SK-N-SH (cell line): ENCODE measurements at regions of chr10 and their contacts with region 1.

Region 1: GRCh38 chr10:132892004-132892403 is 50.4 kb downstream of the CFAP46 start:
- DNase-seq: no peak
- H3K4me3 ChIP-seq: no peak overlapping the region
- H3K27ac ChIP-seq: no peak overlapping the region
- H3K4me1 ChIP-seq: no peaks in the 10 kb centered on the region; a peak in 1 of 4 replicates
- H3K27me3 ChIP-seq: no peaks in the 10 kb centered on the region
- CTCF ChIP-seq: no peak
- EP300 ChIP-seq: no peak
- RAD21 ChIP-seq: no peak

Region 2: DNA sequence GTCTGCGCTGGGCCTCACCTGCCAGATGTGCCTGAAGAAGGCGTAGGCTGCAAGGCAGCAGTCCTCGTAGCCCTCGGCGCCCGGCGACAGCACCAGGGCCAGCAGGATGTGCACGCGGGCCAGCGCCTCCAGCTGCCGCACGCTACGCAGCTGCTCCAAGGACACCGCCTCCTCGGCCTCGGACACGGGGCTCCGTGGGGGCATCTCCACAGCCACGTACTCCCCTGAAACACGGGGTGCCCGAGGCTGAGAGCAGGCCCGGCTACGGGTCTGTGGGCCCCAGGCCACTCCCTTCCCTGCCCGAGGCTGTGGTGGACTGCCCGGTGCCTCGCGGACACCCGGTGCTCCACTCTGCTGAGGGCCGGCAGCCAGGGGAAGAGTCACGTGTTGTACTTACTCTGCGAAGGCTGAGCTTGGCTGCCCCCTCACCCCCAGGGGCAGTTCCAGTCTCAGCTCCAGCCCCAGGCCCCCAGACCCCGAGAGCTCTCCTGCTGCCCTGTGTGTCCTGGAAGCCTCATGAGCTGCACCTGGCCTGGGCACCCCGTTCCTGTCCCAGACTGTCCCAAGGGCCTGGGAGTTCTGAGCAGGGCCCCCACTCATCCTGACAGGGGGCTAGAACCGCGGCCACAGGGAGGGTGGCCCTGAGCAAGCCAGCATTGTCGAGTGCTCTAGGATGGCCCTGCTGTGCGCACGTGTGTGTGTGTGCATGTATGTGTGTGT is 12.4 kb before region 1 on chr10:
- CTCF ChIA-PET with region 1: no interaction called
- POLR2A ChIA-PET with region 1: no interaction called
- DNase-seq: no peak
- H3K4me3 ChIP-seq: no peak overlapping the region
- H3K27ac ChIP-seq: no peak overlapping the region
- H3K4me1 ChIP-seq: no peaks in the 10 kb centered on the region; a peak in 1 of 4 replicates
- H3K27me3 ChIP-seq: no peaks in the 10 kb centered on the region
- CTCF ChIP-seq: no peak
- EP300 ChIP-seq: no peak
- RAD21 ChIP-seq: no peak

Region 3: GRCh38 chr10:132904181-132904819 is 12.3 kb after region 1 on chr10:
- CTCF ChIA-PET with region 1: interaction called, 12 read pairs
- POLR2A ChIA-PET with region 1: no interaction called
- DNase-seq: peak; percentile 90
- H3K4me3 ChIP-seq: no peak overlapping the region
- H3K27ac ChIP-seq: no peak overlapping the region
- H3K4me1 ChIP-seq: no peaks in the 10 kb centered on the region
- H3K27me3 ChIP-seq: no peaks in the 10 kb centered on the region; the same call in 1 of the 2 replicates
- CTCF ChIP-seq: peak; percentile 72
- EP300 ChIP-seq: no peak
- RAD21 ChIP-seq: peak; percentile 82

Region 4: DNA sequence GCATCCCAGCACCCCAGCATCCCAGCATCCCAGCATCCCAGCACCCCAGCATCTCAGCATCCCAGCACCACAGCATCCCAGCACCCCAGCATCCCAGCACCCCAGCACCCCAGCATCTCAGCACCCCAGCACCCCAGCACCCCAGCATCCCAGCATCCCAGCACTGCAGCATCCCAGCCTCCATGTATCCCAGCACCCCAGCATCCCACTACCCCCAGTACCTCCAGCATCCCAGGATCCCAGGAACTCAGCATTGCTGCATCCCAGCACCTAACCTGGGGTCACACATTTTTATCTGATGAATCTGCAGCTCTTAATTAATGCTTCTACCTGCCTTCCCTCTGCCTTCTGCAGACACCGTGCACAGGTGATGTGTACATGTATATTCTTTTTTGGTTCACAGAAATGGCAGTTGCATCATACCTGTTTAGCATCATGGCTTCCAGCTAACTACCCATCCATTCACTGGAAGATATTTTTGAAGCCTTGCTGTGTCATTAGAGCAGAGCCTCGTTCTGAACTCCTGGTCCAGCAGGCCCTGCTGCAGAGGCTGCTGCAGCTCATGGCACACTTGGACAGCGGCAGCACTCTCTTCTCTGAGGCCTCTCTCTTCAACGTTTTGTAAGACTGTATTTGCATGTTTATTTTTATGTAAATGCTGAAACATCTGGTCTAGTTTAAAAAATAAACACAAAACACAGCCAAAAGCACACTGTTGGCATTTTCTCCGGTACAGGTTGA is 55.0 kb after region 1 on chr10:
- CTCF ChIA-PET with region 1: no interaction called
- POLR2A ChIA-PET with region 1: no interaction called
- DNase-seq: no peak
- H3K4me3 ChIP-seq: no peak overlapping the region
- H3K27ac ChIP-seq: no peak overlapping the region
- H3K4me1 ChIP-seq: peaks cover 0 to 4% of the 10 kb centered on the region in 2 experiments; a peak in 1 of 4 replicates
- H3K27me3 ChIP-seq: peaks cover 15% of the 10 kb centered on the region
- CTCF ChIP-seq: no peak
- EP300 ChIP-seq: no peak
- RAD21 ChIP-seq: no peak